Caco-2 (cell line): ENCODE measurements at regions of chr3 and their contacts with region 1.

Region 1: GRCh38 chr3:53195602-53196574 is 34.9 kb downstream of the PRKCD start:
- DNase-seq: peak in 1 of 2 experiments; percentile 65
- H3K4me3 ChIP-seq: no peak overlapping the region
- H3K4me3 Mint-ChIP-seq: no peak overlapping the region
- H3K27ac Mint-ChIP-seq: no peak overlapping the region
- H3K4me1 ChIP-seq: no peaks in the 10 kb centered on the region
- H3K4me1 Mint-ChIP-seq: no peaks in the 10 kb centered on the region
- H3K27me3 ChIP-seq: no peaks in the 10 kb centered on the region; the same call in 1 of the 2 replicates
- H3K27me3 Mint-ChIP-seq: no peaks in the 10 kb centered on the region
- CTCF ChIP-seq: peak; percentile 96 to 97

Region 2: GRCh38 chr3:52663098-52663497 is 532.8 kb before region 1 on chr3:
- CTCF ChIA-PET with region 1: no interaction called
- POLR2A ChIA-PET with region 1: no interaction called
- intact Hi-C with region 1: no loop called
- DNase-seq: no peak
- H3K4me3 ChIP-seq: no peak overlapping the region
- H3K4me3 Mint-ChIP-seq: no peak overlapping the region
- H3K27ac Mint-ChIP-seq: no peak overlapping the region
- H3K4me1 ChIP-seq: no peaks in the 10 kb centered on the region
- H3K4me1 Mint-ChIP-seq: no peaks in the 10 kb centered on the region
- H3K27me3 ChIP-seq: no peaks in the 10 kb centered on the region
- H3K27me3 Mint-ChIP-seq: no peaks in the 10 kb centered on the region
- CTCF ChIP-seq: no peak

Region 3: DNA sequence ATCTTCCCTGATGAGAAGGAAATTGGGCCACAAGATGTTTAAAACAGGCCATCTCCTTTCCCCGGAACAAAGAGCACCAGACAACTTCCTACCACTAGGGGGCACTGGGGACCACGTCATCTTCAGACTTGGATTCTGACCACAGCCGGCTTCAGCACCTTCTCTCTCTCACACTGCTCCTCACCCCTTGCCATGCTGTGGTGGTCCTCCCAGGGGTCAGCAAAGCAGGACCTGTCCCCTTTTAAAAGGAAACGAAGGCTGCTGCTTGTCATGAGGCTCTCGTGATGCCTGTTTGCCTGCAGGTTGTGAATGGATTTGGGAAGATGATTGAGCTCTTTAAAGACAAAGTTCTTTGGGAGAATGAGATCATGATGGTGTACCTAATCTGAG is 81.9 kb before region 1 on chr3:
- CTCF ChIA-PET with region 1: interaction called, 30 read pairs
- POLR2A ChIA-PET with region 1: interaction called, 4 read pairs
- intact Hi-C with region 1: loop called (anchors 1 kb)
- DNase-seq: peak; percentile 75 to 82
- H3K4me3 ChIP-seq: no peak overlapping the region
- H3K4me3 Mint-ChIP-seq: no peak overlapping the region
- H3K27ac Mint-ChIP-seq: no peak overlapping the region
- H3K4me1 ChIP-seq: no peaks in the 10 kb centered on the region
- H3K4me1 Mint-ChIP-seq: no peaks in the 10 kb centered on the region
- H3K27me3 ChIP-seq: no peaks in the 10 kb centered on the region
- H3K27me3 Mint-ChIP-seq: no peaks in the 10 kb centered on the region
- CTCF ChIP-seq: peak; percentile 85 to 89

Region 4: GRCh38 chr3:53130179-53131061 is 65.5 kb before region 1 on chr3 and contains the start of gene RFT1:
- CTCF ChIA-PET with region 1: interaction called, 9 read pairs
- POLR2A ChIA-PET with region 1: no interaction called
- intact Hi-C with region 1: loop called (anchors 2 kb)
- DNase-seq: peak; percentile 96 to 97
- H3K4me3 ChIP-seq: peak within 1 kb of the TSS; percentile 75
- H3K4me3 Mint-ChIP-seq: peak within 1 kb of the TSS; percentile 84
- H3K27ac Mint-ChIP-seq: peak within 1 kb of the TSS; percentile 77
- H3K4me1 ChIP-seq: peaks cover 14% of the 10 kb centered on the region
- H3K4me1 Mint-ChIP-seq: peaks cover 18% of the 10 kb centered on the region
- H3K27me3 ChIP-seq: no peaks in the 10 kb centered on the region
- H3K27me3 Mint-ChIP-seq: no peaks in the 10 kb centered on the region
- CTCF ChIP-seq: no peak
- total RNA-seq, gene RFT1: 33.1 and 35.7 TPM in 2 replicates

Region 5: DNA sequence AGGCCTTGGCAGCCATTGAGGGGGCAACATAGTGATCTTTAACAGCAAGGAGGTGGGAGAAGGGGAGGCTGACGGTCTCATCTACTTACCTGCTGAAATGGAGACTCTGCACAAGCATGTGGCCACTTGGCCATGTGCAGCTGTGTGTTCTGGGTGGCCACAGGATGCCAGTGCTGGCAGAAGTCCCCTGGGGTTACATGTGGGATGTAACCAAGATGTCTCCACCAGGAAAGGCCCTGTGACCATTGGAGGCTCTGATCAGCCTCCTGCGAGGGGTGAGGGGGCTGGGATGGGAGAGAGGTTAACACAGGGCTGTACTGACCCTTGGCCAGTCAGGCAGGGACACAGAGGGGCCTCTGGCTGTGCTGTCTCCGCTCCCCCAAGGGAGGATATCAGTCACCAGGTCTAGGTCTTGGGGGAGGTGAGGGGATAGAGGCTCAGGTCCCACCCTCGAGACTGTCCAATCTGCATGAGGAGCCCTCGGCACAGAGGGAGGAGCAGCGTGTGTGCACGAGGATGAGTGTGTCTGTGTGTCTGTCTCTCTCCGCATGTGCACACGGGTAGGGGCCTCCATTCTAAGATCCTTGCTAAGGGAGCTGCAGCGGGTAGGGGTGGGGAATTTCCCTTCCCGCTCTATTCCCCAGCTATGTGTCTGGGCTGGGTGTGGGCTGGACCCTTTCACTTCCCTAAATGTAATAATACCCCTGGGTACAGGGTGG is 15.4 kb before region 1 on chr3:
- CTCF ChIA-PET with region 1: no interaction called
- POLR2A ChIA-PET with region 1: no interaction called
- intact Hi-C with region 1: no loop called
- DNase-seq: no peak
- H3K4me3 ChIP-seq: no peak overlapping the region
- H3K4me3 Mint-ChIP-seq: no peak overlapping the region
- H3K27ac Mint-ChIP-seq: no peak overlapping the region
- H3K4me1 ChIP-seq: no peaks in the 10 kb centered on the region
- H3K4me1 Mint-ChIP-seq: no peaks in the 10 kb centered on the region
- H3K27me3 ChIP-seq: no peaks in the 10 kb centered on the region
- H3K27me3 Mint-ChIP-seq: no peaks in the 10 kb centered on the region
- CTCF ChIP-seq: no peak